CD8-positive, alpha-beta memory T cell (primary cell): ENCODE measurements at regions of chr2 and their contacts with region 1.

Region 1: GRCh38 chr2:24827321-24828237 is 34.4 kb downstream of the CENPO start:
- DNase-seq: peak; percentile 52 to 81 (median 57)
- H3K4me3 ChIP-seq: no peak overlapping the region
- H3K4me3 Mint-ChIP-seq: no peak overlapping the region
- H3K27ac ChIP-seq: no peak overlapping the region
- H3K27ac Mint-ChIP-seq: peak overlapping the region in 1 of 8 donors; percentile 75
- H3K4me1 ChIP-seq: no peaks in the 10 kb centered on the region
- H3K4me1 Mint-ChIP-seq: peaks cover 10 to 23% (median 17%) of the 10 kb centered on the region in 3 donors
- H3K27me3 ChIP-seq: no peaks in the 10 kb centered on the region
- H3K27me3 Mint-ChIP-seq: no peaks in the 10 kb centered on the region

Region 2: DNA sequence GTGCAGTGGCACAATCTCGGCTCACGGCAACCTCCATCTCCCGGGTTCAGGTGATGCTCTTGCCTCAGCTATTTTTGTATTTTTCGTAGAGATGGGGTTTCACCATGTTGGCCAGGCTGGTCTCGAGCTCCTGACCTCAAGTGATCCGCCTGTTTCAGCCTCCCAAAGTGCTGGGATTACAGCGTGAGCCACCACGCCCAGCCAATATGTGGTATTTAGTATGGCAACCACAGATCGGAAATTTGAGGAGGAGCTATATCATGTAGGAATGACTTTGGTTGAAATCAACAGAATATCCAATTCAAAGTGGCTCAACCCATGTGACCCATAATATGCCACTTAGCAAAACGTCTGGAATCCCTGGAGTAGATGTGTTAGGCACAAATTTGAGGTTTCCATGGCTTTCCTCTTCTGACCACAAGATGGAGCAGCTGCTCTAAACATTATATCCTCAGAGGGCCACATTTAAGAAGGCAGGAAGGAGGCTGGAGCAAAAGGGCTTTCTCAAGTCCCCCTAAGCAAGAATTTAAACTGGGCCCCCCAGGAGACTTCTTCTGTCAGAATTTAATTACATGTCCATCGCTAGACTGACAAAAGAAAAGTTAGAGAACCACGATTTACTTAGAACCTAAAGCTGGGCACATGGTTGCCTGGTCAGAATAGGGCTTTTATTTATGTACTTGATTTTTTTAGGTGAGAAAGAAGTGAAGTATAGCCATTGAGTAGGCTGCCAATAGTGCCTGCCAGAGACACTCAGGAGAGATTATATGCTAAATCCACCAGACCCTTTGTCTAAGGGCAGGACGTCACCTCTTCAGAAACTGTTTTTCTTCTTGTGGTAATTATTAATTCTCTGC is 417.7 kb before region 1 on chr2:
- CTCF ChIA-PET with region 1: interaction called, 104 read pairs
- POLR2A ChIA-PET with region 1: no interaction called
- DNase-seq: peak in 4 of 5 donors; percentile 20 to 59 (median 46)
- H3K4me3 ChIP-seq: no peak overlapping the region
- H3K4me3 Mint-ChIP-seq: no peak overlapping the region
- H3K27ac ChIP-seq: no peak overlapping the region
- H3K27ac Mint-ChIP-seq: no peak overlapping the region
- H3K4me1 ChIP-seq: no peaks in the 10 kb centered on the region
- H3K4me1 Mint-ChIP-seq: peaks cover 0 to 2% (median 0%) of the 10 kb centered on the region in 3 donors
- H3K27me3 ChIP-seq: no peaks in the 10 kb centered on the region
- H3K27me3 Mint-ChIP-seq: peaks cover 6 to 19% of the 10 kb centered on the region in 2 donors

Region 3: DNA sequence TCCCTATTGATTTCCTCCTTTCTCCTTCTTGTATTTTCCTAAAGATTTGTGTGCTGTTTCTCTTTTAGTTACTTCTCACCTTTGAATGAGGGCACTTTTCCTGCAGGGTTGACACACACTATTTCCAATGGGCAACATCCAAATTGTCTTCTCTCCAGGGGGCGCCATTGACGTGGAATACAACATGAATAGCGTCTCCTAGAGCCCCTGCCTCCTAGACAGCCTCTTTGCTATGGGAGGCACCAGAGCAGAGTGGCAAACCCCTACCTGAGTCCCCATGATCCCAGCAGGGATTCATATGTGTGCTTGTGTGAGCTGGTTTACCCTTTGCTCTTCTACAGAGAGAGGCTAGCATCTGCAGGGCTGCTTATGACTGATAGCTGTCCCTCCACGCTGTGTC is 405.9 kb before region 1 on chr2:
- CTCF ChIA-PET with region 1: interaction called, 18 read pairs
- POLR2A ChIA-PET with region 1: no interaction called
- DNase-seq: peak; percentile 22 to 66 (median 25)
- H3K4me3 ChIP-seq: no peak overlapping the region
- H3K4me3 Mint-ChIP-seq: no peak overlapping the region
- H3K27ac ChIP-seq: no peak overlapping the region
- H3K27ac Mint-ChIP-seq: no peak overlapping the region
- H3K4me1 ChIP-seq: no peaks in the 10 kb centered on the region
- H3K4me1 Mint-ChIP-seq: no peaks in the 10 kb centered on the region
- H3K27me3 ChIP-seq: no peaks in the 10 kb centered on the region
- H3K27me3 Mint-ChIP-seq: no peaks in the 10 kb centered on the region

Region 4: GRCh38 chr2:24515831-24516230 is 311.7 kb before region 1 on chr2:
- CTCF ChIA-PET with region 1: no interaction called
- POLR2A ChIA-PET with region 1: interaction called, 14 read pairs
- DNase-seq: no peak
- H3K4me3 ChIP-seq: no peak overlapping the region
- H3K4me3 Mint-ChIP-seq: peak overlapping the region in 3 of 7 donors; percentile 14 to 22 (median 18)
- H3K27ac ChIP-seq: no peak overlapping the region
- H3K27ac Mint-ChIP-seq: peak overlapping the region in 2 of 8 donors; percentile 37 to 49
- H3K4me1 ChIP-seq: peaks cover 29% of the 10 kb centered on the region
- H3K4me1 Mint-ChIP-seq: peaks cover 51 to 84% (median 83%) of the 10 kb centered on the region in 3 donors
- H3K27me3 ChIP-seq: no peaks in the 10 kb centered on the region
- H3K27me3 Mint-ChIP-seq: no peaks in the 10 kb centered on the region

Region 5: GRCh38 chr2:24613154-24613814 is 214.3 kb before region 1 on chr2:
- CTCF ChIA-PET with region 1: interaction called, 12 read pairs
- POLR2A ChIA-PET with region 1: no interaction called
- DNase-seq: peak in 4 of 5 donors; percentile 0 to 52 (median 8)
- H3K4me3 ChIP-seq: no peak overlapping the region
- H3K4me3 Mint-ChIP-seq: peak overlapping the region in 4 of 7 donors; percentile 6 to 55 (median 35)
- H3K27ac ChIP-seq: no peak overlapping the region
- H3K27ac Mint-ChIP-seq: peak overlapping the region in 7 of 8 donors; percentile 1 to 94 (median 75)
- H3K4me1 ChIP-seq: peaks cover 7% of the 10 kb centered on the region
- H3K4me1 Mint-ChIP-seq: peaks cover 31 to 49% (median 46%) of the 10 kb centered on the region in 3 donors
- H3K27me3 ChIP-seq: no peaks in the 10 kb centered on the region
- H3K27me3 Mint-ChIP-seq: no peaks in the 10 kb centered on the region

Region 6: DNA sequence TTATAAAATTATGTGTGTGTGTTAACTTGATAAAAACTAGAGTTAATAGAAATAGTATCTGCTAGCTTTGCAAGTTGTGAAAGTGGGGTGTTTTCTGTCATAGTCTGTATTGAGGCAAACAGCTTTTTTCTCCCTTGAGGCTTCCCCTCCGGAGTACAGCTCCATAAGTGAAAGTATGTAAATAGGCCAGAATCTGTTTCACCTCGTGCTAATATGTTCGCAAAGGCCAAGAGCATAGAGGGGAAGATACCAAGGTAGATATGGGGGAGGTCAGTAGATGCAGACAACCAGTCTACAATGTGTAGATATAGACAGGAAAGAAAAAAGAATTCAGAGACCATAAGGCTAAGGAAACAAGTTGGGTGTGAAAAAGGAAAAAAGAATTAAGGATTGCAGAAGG is 107.3 kb before region 1 on chr2:
- CTCF ChIA-PET with region 1: no interaction called
- POLR2A ChIA-PET with region 1: no interaction called
- DNase-seq: no peak
- H3K4me3 ChIP-seq: no peak overlapping the region
- H3K4me3 Mint-ChIP-seq: no peak overlapping the region
- H3K27ac ChIP-seq: no peak overlapping the region
- H3K27ac Mint-ChIP-seq: peak overlapping the region in 2 of 8 donors; percentile 29 to 59
- H3K4me1 ChIP-seq: no peaks in the 10 kb centered on the region
- H3K4me1 Mint-ChIP-seq: peaks cover 0 to 3% (median 1%) of the 10 kb centered on the region in 3 donors
- H3K27me3 ChIP-seq: no peaks in the 10 kb centered on the region
- H3K27me3 Mint-ChIP-seq: no peaks in the 10 kb centered on the region